ENCODE measurements at regions of chr20 and their contacts with region 1.

Region 1: GRCh38 chr20:50095476-50096078 is 17.4 kb downstream of the UBE2V1 start:
- DNase-seq: no peak
- ATAC-seq: no peak
- H3K4me3 Mint-ChIP-seq: no peak overlapping the region
- H3K27ac Mint-ChIP-seq: no peak overlapping the region
- H3K4me1 Mint-ChIP-seq: peaks cover 22% of the 10 kb centered on the region
- H3K27me3 Mint-ChIP-seq: no peaks in the 10 kb centered on the region
- CTCF ChIP-seq: no peak

Region 2: GRCh38 chr20:49054056-49054643 is 1041.4 kb before region 1 on chr20:
- CTCF ChIA-PET with region 1: no interaction called
- POLR2A ChIA-PET with region 1: interaction called, 14 read pairs
- intact Hi-C with region 1: no loop called
- DNase-seq: no peak
- ATAC-seq: no peak
- H3K4me3 Mint-ChIP-seq: no peak overlapping the region
- H3K27ac Mint-ChIP-seq: no peak overlapping the region
- H3K4me1 Mint-ChIP-seq: peaks cover 44% of the 10 kb centered on the region
- H3K27me3 Mint-ChIP-seq: no peaks in the 10 kb centered on the region
- CTCF ChIP-seq: no peak

Region 3: DNA sequence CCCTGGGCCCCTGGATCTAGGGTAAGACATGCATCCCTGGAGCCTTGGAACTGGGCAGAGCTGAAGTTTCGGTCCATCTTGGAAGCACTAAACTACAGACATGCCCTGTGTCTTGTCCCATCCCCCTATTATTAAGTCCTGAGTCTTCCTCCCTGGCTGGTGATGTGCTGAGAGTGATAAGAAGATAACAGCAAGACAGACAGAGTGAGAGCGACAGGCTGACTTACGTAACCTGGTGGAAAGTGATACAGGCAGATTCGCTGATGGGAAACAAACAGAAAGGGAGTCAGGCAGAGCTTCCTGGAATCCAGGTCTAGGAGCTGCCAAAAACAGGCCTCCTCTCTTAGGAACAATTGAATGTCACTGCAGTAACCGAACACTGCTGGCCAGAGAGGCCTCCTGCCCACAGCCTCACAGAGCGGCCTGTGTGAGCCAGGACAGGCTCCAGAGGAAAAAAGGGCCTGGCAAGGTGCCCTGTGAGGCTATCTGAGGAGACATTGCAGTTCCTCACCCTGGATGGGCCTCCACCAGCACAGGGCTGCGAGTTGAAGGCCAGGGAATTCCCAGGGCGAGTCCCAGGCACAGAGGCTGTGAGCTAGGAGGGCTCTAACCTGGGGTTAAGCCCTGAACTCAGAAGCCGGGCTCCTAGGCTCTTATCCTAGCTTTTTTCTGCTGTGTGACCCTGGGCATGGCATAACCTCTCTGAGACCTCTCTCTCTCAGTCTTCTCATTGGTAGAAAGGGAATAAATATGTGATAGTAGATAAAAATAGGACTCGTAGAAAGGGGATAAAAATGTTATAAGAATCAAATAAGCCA is 347.7 kb before region 1 on chr20:
- CTCF ChIA-PET with region 1: no interaction called
- POLR2A ChIA-PET with region 1: no interaction called
- intact Hi-C with region 1: no loop called
- DNase-seq: no peak
- ATAC-seq: no peak
- H3K4me3 Mint-ChIP-seq: no peak overlapping the region
- H3K27ac Mint-ChIP-seq: no peak overlapping the region
- H3K4me1 Mint-ChIP-seq: peaks cover 16% of the 10 kb centered on the region
- H3K27me3 Mint-ChIP-seq: no peaks in the 10 kb centered on the region
- CTCF ChIP-seq: no peak

Region 4: GRCh38 chr20:50110141-50110925 is 14.8 kb after region 1 on chr20:
- CTCF ChIA-PET with region 1: no interaction called
- POLR2A ChIA-PET with region 1: no interaction called
- intact Hi-C with region 1: loop called (anchors 2 kb)
- DNase-seq: no peak
- ATAC-seq: peak; percentile 31
- H3K4me3 Mint-ChIP-seq: peak overlapping the region; percentile 98
- H3K27ac Mint-ChIP-seq: peak overlapping the region; percentile 88
- H3K4me1 Mint-ChIP-seq: peaks cover 89% of the 10 kb centered on the region
- H3K27me3 Mint-ChIP-seq: no peaks in the 10 kb centered on the region
- CTCF ChIP-seq: no peak

Measured in activated B cell treated with CpG ODN at 0.5 μM for 24 hours (primary cell).